OCI-LY7 (cell line): ENCODE measurements at regions of chr2 and their contacts with region 1.

Region 1: GRCh38 chr2:219253753-219254590 is at the start of gene TUBA4A:
- DNase-seq: peak; percentile 93
- H3K4me3 ChIP-seq: peak within 1 kb of the TSS; percentile 87
- H3K27ac ChIP-seq: peak within 1 kb of the TSS; percentile 96
- H3K4me1 ChIP-seq: peaks cover 47% of the 10 kb centered on the region
- CTCF ChIP-seq: no peak
- total RNA-seq, gene TUBA4A: 62.8 and 96.0 TPM in 2 replicates

Region 2: DNA sequence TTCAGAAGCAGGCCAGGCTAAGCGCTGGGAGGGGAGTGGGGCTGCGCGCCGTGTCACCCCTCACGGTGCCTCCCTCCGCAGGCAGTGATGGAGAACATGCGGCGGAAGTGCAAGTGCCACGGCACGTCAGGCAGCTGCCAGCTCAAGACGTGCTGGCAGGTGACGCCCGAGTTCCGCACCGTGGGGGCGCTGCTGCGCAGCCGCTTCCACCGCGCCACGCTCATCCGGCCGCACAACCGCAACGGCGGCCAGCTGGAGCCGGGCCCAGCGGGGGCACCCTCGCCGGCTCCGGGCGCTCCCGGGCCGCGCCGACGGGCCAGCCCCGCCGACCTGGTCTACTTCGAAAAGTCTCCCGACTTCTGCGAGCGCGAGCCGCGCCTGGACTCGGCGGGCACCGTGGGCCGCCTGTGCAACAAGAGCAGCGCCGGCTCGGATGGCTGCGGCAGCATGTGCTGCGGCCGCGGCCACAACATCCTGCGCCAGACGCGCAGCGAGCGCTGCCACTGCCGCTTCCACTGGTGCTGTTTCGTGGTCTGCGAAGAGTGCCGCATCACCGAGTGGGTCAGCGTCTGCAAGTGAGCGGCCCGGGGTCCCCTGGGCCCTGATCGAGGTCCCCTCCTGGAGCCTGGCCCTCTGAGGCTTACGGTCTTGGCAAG is 361.2 kb before region 1 on chr2:
- CTCF ChIA-PET with region 1: no interaction called
- POLR2A ChIA-PET with region 1: no interaction called
- intact Hi-C with region 1: loop called (anchors 10 kb)
- DNase-seq: peak; percentile 95
- H3K4me3 ChIP-seq: peak overlapping the region; percentile 69
- H3K27ac ChIP-seq: peak overlapping the region; percentile 70
- H3K4me1 ChIP-seq: peaks cover 62% of the 10 kb centered on the region
- CTCF ChIP-seq: peak; percentile 77

Region 3: DNA sequence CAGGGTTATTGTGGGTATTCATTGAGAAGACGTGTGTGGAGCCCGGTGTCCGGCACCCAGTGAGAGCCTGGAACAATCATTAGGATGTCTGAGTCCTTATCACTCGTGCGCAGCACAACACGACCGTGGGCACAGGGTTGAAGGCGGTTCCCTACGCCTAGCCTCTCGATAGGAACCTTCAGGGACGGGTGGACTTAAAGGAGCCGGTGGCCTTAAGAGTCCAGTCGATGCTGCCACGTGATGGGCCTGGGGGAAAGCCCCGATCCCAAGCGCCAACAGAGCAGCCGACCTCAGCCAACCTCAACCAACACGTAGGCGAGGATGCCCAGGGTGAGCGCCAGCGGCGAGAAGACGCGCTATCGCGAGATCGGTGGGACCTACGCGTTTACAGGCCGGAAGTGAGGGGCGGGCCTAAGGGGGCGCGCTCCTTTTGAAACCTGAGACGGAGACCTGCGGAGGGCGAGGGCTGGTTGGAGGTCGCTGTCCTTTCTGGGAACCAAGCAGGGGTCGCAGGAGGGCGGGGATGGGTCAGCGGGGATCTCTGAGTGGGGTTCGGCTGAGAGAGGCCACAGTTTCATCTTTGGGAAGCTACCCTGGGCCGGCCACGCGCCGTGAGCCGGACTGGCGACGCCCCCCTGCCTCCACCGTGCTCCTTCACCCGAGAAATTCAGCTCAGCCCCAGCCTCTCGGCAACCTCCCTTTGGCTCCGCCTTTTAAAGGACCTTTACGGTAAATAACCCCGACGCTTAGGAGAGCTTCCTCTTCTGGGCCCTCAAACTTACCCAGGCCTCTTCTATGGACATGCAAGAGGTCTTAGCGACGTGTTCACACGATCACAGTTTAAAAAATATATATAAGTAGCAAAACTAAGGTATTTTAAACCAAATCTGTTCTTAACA is 345.0 kb before region 1 on chr2:
- CTCF ChIA-PET with region 1: no interaction called
- POLR2A ChIA-PET with region 1: no interaction called
- intact Hi-C with region 1: no loop called
- DNase-seq: peak; percentile 97
- H3K4me3 ChIP-seq: peak overlapping the region; percentile 71
- H3K27ac ChIP-seq: peak overlapping the region; percentile 49
- H3K4me1 ChIP-seq: peaks cover 26% of the 10 kb centered on the region
- CTCF ChIP-seq: no peak

Region 4: GRCh38 chr2:219128396-219128795 is 125.6 kb before region 1 on chr2:
- CTCF ChIA-PET with region 1: no interaction called
- POLR2A ChIA-PET with region 1: no interaction called
- intact Hi-C with region 1: no loop called
- DNase-seq: no peak
- H3K4me3 ChIP-seq: no peak overlapping the region
- H3K27ac ChIP-seq: no peak overlapping the region
- H3K4me1 ChIP-seq: no peaks in the 10 kb centered on the region
- CTCF ChIP-seq: no peak

Region 5: GRCh38 chr2:219294356-219295351 is 40.7 kb after region 1 on chr2:
- CTCF ChIA-PET with region 1: interaction called, 13 read pairs
- POLR2A ChIA-PET with region 1: interaction called, 13 read pairs
- intact Hi-C with region 1: loop called (anchors 1 kb)
- DNase-seq: peak; percentile 92
- H3K4me3 ChIP-seq: peak overlapping the region; percentile 64
- H3K27ac ChIP-seq: no peak overlapping the region
- H3K4me1 ChIP-seq: peaks cover 21% of the 10 kb centered on the region
- CTCF ChIP-seq: peak; percentile 97